HepG2 (cell line): ENCODE measurements at regions of chr6 and their contacts with region 1.

Region 1: DNA sequence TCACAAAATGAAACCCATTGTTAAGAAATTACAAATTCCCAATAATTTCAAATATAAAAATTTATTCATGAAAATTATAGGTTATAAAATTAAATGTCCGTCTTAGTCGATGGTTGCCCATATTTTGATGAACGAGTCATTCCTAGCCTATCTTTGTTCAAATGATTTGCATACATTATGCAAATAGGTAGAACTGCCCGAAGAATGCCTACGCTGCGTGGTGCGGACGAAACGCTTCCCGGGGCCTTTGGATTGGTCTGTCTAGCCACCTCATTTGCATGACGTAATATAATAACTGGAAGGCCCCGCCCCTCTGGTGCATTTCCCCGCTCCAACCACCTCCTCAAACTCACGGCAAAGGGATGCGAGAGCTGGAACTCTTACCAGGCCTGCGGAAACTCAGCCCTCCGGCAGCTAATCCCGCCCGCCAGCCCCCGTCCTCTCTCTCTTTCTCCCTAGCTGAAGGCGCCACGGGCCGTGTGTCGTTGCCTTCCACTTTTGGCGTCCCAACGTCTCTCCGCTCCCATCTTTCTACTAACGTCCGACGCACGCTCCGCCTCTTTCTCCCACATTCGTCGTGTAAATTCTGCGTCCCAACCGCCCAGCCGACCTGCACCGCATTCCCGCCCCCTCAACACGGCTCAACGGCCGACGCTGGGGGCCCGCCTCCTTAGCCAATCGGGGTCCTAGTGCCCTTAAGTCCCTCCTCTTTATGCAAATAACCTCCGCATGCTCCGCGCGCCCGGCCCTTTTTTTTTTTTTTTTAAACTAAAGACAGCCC is 520 bp upstream of the PRRC2A start:
- DNase-seq: peak; percentile 99
- ATAC-seq: peak; percentile 90
- H3K4me3 ChIP-seq: peak overlapping the region; percentile 63 to 92 (median 75)
- H3K27ac ChIP-seq: peak overlapping the region; percentile 98
- H3K4me1 ChIP-seq: peaks cover 36% of the 10 kb centered on the region
- H3K27me3 ChIP-seq: no peaks in the 10 kb centered on the region; a peak in 1 of 5 replicates
- CTCF ChIP-seq: no peak
- EP300 ChIP-seq: no peak; a peak in 1 of 4 replicates
- POLR2A ChIP-seq: peak; percentile 81 to 85
- RAD21 ChIP-seq: peak; percentile 34; the same call in 1 of the 2 replicates

Region 2: DNA sequence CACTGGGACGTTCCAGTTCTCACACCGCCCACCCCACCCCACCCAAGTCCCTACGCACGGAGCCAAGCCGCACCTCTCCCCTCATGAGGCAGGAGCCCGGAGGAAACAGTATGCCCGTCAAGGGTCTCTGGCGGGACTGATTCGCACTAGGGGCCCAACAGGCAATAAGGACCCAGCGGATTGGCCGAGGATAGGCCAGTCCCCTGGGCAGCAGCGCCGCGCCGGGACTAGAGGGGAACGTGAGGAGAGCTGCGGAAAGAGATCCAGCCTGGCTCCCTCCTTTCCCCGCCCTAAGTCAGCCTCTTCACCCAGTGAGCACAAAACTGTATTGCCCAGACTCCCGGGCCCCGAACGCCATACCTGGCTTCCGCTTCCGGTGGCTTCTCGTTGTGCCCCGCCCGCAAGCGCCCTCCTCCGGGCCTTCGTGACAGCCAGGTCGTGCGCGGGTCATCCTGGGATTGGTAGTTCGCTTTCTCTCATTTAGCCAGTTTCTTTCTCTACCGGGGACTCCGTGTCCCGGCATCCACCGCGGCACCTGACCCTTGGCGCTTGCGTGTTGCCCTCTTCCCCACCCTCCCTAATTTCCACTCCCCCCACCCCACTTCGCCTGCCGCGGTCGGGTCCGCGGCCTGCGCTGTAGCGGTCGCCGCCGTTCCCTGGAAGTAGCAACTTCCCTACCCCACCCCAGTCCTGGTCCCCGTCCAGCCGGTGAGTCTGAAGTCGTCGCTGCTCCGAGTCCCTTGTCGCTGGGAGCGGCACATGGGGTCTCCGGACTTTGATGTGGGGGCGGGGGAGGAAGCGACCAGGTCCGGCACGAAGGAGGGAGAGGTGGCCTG is 45.7 kb after region 1 on chr6 and contains the start of gene CSNK2B:
- CTCF ChIA-PET with region 1: no interaction called
- POLR2A ChIA-PET with region 1: interaction called, 16 read pairs
- in situ Hi-C with region 1: no loop called
- intact Hi-C with region 1: loop called (anchors 5 kb)
- DNase-seq: peak; percentile 99
- ATAC-seq: peak; percentile 83
- H3K4me3 ChIP-seq: peak within 1 kb of the TSS; percentile 93 to 98 (median 94)
- H3K27ac ChIP-seq: peak within 1 kb of the TSS; percentile 99
- H3K4me1 ChIP-seq: peaks cover 71% of the 10 kb centered on the region
- H3K27me3 ChIP-seq: no peaks in the 10 kb centered on the region; a peak in 1 of 5 replicates
- CTCF ChIP-seq: peak; percentile 21
- EP300 ChIP-seq: 0 out of 4 replicates have a peak, but pooled peaks of 1 of the 2 experiments have one; percentile 1
- POLR2A ChIP-seq: peak in 1 of 2 experiments; percentile 98; a peak in 2 of 4 replicates
- RAD21 ChIP-seq: peak; percentile 8; the same call in 1 of the 2 replicates
- total RNA-seq, gene CSNK2B: 296 and 316 TPM in 2 replicates